B cell (primary cell): ENCODE measurements at regions of chr6 and their contacts with region 1.

Region 1: DNA sequence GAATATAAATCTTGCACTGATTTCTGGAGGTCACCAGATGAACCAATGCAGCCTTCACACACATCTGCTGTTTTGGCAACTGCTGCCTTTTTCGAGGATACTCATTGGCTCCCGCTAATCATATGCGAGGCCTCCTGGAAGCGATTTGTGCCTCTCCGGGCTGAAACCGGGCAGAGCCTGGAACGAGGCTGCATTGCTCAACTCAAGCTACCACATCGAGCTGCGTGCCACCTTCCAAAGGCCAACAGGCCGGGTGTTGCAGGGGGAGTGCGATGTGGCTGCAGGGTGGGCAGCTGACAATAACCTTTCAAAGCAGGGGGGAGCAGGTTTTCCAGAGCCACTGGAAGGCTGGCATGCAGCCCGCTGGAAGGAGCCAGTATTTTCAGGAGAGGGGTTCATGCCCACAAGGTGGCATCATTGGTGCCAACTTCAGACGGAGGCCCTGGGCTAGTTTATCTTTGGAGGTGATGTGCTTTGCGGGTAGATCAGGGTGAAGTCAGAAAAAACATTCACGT is 122.6 kb upstream of the IFNGR1 start:
- DNase-seq: peak; percentile 44
- ATAC-seq: no peak
- H3K4me3 ChIP-seq: peak overlapping the region in 1 of 5 experiments; percentile 62
- H3K4me3 Mint-ChIP-seq: peak overlapping the region; percentile 64
- H3K27ac ChIP-seq: no peak overlapping the region
- H3K27ac Mint-ChIP-seq: no peak overlapping the region
- H3K4me1 ChIP-seq: peaks cover 7 to 9% of the 10 kb centered on the region in 2 donors
- H3K4me1 Mint-ChIP-seq: peaks cover 15% of the 10 kb centered on the region
- H3K27me3 ChIP-seq: no peaks in the 10 kb centered on the region
- H3K27me3 Mint-ChIP-seq: peaks cover 12% of the 10 kb centered on the region
- CTCF ChIP-seq: peak; percentile 19

Region 2: DNA sequence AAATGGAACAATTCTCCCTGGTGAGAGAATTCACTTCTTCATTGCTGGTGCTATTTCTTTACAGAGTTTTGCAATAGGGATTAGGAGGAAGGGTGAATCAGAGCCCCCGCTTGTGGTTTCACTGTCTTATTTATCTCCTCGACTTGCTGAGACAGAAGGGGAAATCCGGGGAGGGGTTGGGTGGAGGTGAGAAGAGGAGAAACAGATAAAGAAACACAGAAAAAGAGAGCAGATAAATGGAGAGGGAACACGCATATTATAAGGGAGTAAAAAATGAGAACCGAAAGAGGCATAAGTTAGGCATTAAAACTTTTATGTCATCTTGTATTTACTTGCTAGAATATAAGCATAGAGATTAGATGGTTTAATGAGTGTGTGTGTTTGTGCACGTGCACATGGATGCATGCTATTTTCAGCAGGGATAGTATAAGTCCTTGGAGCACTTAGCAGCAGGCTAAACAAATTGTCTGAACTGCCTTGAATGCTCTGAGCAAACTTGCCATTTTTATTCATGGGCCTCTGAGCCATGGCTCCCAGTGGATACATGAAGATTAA is 47.5 kb after region 1 on chr6:
- CTCF ChIA-PET with region 1: no interaction called
- POLR2A ChIA-PET with region 1: no interaction called
- intact Hi-C with region 1: loop called (anchors 1 kb)
- DNase-seq: peak; percentile 66
- ATAC-seq: peak; percentile 91
- H3K4me3 ChIP-seq: peak overlapping the region in 1 of 5 experiments; percentile 9
- H3K4me3 Mint-ChIP-seq: peak overlapping the region; percentile 61
- H3K27ac ChIP-seq: peak overlapping the region; percentile 21 to 55
- H3K27ac Mint-ChIP-seq: peak overlapping the region; percentile 42
- H3K4me1 ChIP-seq: peaks cover 29 to 30% of the 10 kb centered on the region in 2 donors
- H3K4me1 Mint-ChIP-seq: peaks cover 28% of the 10 kb centered on the region
- H3K27me3 ChIP-seq: no peaks in the 10 kb centered on the region
- H3K27me3 Mint-ChIP-seq: no peaks in the 10 kb centered on the region
- CTCF ChIP-seq: no peak